ENCODE measurements at regions of chr10 and their contacts with region 1.

Region 1: GRCh38 chr10:114911052-114911711 is 26.8 kb upstream of the TRUB1 start:
- DNase-seq: no peak
- H3K4me3 Mint-ChIP-seq: peak overlapping the region; percentile 43
- H3K27ac Mint-ChIP-seq: peak overlapping the region; percentile 86
- H3K4me1 Mint-ChIP-seq: peaks cover 50% of the 10 kb centered on the region
- H3K27me3 Mint-ChIP-seq: peaks cover 2% of the 10 kb centered on the region

Region 2: GRCh38 chr10:114492351-114493037 is 418.7 kb before region 1 on chr10:
- intact Hi-C with region 1: loop called (anchors 1 kb)
- DNase-seq: peak; percentile 22
- H3K4me3 Mint-ChIP-seq: no peak overlapping the region
- H3K27ac Mint-ChIP-seq: peak overlapping the region; percentile 67
- H3K4me1 Mint-ChIP-seq: peaks cover 56% of the 10 kb centered on the region
- H3K27me3 Mint-ChIP-seq: no peaks in the 10 kb centered on the region

Region 3: GRCh38 chr10:114821293-114821914 is 89.8 kb before region 1 on chr10 and contains the start of gene FHIP2A:
- intact Hi-C with region 1: loop called (anchors 2 kb)
- DNase-seq: peak; percentile 82
- H3K4me3 Mint-ChIP-seq: peak within 1 kb of the TSS; percentile 93
- H3K27ac Mint-ChIP-seq: peak within 1 kb of the TSS; percentile 86
- H3K4me1 Mint-ChIP-seq: peaks cover 42% of the 10 kb centered on the region
- H3K27me3 Mint-ChIP-seq: peaks cover 19% of the 10 kb centered on the region
- total RNA-seq, gene FHIP2A: 26.3 and 26.9 TPM in 2 replicates

Region 4: DNA sequence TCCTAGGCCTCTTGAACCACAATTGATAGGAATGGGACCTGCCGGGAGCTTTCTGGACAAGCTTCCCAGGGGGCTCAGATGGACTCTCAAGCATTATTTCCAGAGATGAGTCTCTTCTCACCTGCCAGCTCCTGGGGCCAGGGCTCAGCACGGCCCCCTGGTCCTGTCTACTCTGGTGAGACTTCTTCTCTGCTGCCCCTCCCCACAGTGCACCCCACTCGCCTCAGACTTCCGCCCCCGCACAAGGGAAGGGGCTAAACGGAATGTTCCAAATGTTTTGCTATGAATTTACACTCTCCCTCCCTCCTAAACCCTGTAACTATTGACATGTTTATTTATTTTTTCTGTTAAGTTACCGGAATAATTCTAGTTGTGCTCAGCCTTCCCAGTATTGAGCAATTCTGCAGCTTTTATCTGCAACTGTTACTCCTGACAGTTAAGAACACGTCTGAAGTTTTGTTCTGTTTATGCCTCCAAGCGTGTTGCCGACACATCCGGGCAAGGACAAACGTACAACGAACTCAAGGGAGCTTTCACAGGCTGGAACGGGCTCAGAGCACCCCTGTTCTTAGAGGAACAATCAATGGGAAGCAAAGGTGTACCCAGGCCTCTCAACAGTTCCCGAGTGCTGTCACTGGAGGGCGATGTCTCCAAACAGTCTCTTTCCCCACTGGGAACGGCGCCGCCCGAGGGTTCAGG is 34.4 kb before region 1 on chr10:
- intact Hi-C with region 1: loop called (anchors 2 kb)
- DNase-seq: peak; percentile 37
- H3K4me3 Mint-ChIP-seq: no peak overlapping the region
- H3K27ac Mint-ChIP-seq: no peak overlapping the region
- H3K4me1 Mint-ChIP-seq: peaks cover 19% of the 10 kb centered on the region
- H3K27me3 Mint-ChIP-seq: peaks cover 20% of the 10 kb centered on the region

Region 5: DNA sequence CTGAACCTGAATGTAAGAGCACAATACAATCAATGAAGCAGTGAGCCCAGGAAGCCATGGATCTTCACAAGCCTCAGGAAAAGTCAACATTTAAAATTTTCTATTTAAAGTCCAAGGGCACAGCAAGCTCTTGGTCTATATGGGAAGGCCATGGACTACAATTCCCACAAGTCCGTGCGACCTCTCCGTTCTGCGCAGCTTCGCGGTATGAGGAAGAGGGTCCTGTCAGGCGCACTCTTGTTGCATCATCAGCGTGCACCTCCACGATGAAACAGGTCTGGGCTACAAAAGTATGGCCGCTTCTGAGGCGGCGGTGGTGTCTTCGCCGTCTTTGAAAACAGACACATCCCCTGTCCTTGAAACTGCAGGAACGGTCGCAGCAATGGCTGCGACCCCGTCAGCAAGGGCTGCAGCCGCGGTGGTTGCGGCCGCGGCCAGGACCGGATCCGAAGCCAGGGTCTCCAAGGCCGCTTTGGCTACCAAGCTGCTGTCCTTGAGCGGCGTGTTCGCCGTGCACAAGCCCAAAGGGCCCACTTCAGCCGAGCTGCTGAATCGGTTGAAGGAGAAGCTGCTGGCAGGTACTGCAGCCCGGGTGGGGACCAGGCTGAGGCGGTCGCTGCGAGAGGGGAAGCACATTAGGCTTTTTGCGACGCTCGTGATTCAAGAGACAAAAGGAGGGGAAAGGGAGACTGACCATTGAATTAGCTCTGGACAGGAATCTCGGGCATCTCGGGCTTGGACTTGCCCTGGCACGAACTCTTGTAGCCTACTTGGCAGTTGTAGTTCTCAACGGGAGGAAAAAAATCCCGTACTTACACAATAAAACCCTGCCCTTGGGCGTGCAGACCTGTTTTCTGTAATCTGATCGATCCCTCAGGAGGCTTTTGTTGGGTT is 27.0 kb after region 1 on chr10 and contains the start of gene TRUB1:
- intact Hi-C with region 1: loop called (anchors 1 kb)
- DNase-seq: peak; percentile 80
- H3K4me3 Mint-ChIP-seq: peak within 1 kb of the TSS; percentile 95
- H3K27ac Mint-ChIP-seq: peak within 1 kb of the TSS; percentile 93
- H3K4me1 Mint-ChIP-seq: peaks cover 28% of the 10 kb centered on the region
- H3K27me3 Mint-ChIP-seq: no peaks in the 10 kb centered on the region
- total RNA-seq, gene TRUB1: 20.3 and 21.4 TPM in 2 replicates